ENCODE measurements at regions of chr9 and their contacts with region 1.

Region 1: DNA sequence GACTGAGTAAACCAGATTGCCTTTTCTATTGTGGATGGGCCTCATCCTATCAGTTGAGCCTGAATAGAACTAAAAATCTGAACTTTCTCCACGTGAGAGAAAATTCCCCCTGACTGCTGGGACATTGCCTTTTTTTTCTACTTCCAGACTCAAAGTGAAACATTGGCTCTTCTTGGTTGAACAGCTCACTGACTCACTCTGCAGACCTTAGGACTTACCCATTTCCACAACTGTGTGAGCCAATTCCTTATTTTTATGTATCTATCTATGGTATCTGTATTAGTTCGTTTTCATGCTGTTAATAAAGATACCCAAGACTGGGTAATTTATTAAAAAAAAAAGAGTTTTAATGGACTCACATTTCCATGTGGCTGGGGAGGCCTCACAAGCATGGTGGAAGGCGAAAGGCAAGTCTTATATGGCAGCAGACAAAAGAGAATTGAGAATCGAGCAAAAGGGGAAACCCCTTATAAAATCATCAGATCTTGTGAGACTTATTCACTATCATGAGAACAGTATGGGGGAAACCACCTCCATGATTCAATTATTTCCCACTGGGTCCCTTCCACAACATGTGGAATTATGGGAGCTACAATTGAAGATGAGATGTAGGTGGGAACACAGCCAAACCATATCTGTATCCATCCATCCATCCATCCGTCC is 306.7 kb upstream of the SLC24A2 start:
- DNase-seq: no peak
- ATAC-seq: no peak
- H3K4me3 ChIP-seq: no peak overlapping the region
- H3K4me3 Mint-ChIP-seq: no peak overlapping the region
- H3K27ac ChIP-seq: no peak overlapping the region
- H3K27ac Mint-ChIP-seq: no peak overlapping the region
- H3K4me1 ChIP-seq: no peaks in the 10 kb centered on the region
- H3K4me1 Mint-ChIP-seq: no peaks in the 10 kb centered on the region
- H3K27me3 ChIP-seq: no peaks in the 10 kb centered on the region
- H3K27me3 Mint-ChIP-seq: no peaks in the 10 kb centered on the region

Region 2: GRCh38 chr9:20144197-20144596 is 48.6 kb after region 1 on chr9:
- CTCF ChIA-PET with region 1: no interaction called
- POLR2A ChIA-PET with region 1: no interaction called
- intact Hi-C with region 1: loop called in 1 of 2 experiments (anchors 5 kb)
- DNase-seq: peak in 3 of 9 donors; percentile 5 to 10 (median 7)
- ATAC-seq: no peak
- H3K4me3 ChIP-seq: no peak overlapping the region
- H3K4me3 Mint-ChIP-seq: peak overlapping the region in 9 of 10 donors; percentile 20 to 76 (median 61)
- H3K27ac ChIP-seq: no peak overlapping the region
- H3K27ac Mint-ChIP-seq: peak overlapping the region in 2 of 9 donors; percentile 55 to 87
- H3K4me1 ChIP-seq: no peaks in the 10 kb centered on the region
- H3K4me1 Mint-ChIP-seq: peaks cover 1 to 21% (median 12%) of the 10 kb centered on the region in 7 donors
- H3K27me3 ChIP-seq: no peaks in the 10 kb centered on the region
- H3K27me3 Mint-ChIP-seq: peaks cover 0 to 17% (median 9%) of the 10 kb centered on the region in 5 donors

Region 3: GRCh38 chr9:20242510-20243189 is 147.1 kb after region 1 on chr9:
- CTCF ChIA-PET with region 1: no interaction called
- POLR2A ChIA-PET with region 1: no interaction called
- intact Hi-C with region 1: no loop called
- DNase-seq: peak in 8 of 9 donors; percentile 33 to 82 (median 76)
- ATAC-seq: peak; percentile 86
- H3K4me3 ChIP-seq: peak overlapping the region; percentile 42
- H3K4me3 Mint-ChIP-seq: peak overlapping the region; percentile 51 to 89 (median 83)
- H3K27ac ChIP-seq: peak overlapping the region; percentile 1
- H3K27ac Mint-ChIP-seq: peak overlapping the region; percentile 39 to 90 (median 74)
- H3K4me1 ChIP-seq: peaks cover 18 to 32% of the 10 kb centered on the region in 2 donors
- H3K4me1 Mint-ChIP-seq: peaks cover 38 to 84% (median 72%) of the 10 kb centered on the region in 7 donors
- H3K27me3 ChIP-seq: no peaks in the 10 kb centered on the region
- H3K27me3 Mint-ChIP-seq: no peaks in the 10 kb centered on the region

Measured in naive thymus-derived CD4-positive, alpha-beta T cell (primary cell).